ENCODE measurements at regions of chr5 and their contacts with region 1.

Region 1: DNA sequence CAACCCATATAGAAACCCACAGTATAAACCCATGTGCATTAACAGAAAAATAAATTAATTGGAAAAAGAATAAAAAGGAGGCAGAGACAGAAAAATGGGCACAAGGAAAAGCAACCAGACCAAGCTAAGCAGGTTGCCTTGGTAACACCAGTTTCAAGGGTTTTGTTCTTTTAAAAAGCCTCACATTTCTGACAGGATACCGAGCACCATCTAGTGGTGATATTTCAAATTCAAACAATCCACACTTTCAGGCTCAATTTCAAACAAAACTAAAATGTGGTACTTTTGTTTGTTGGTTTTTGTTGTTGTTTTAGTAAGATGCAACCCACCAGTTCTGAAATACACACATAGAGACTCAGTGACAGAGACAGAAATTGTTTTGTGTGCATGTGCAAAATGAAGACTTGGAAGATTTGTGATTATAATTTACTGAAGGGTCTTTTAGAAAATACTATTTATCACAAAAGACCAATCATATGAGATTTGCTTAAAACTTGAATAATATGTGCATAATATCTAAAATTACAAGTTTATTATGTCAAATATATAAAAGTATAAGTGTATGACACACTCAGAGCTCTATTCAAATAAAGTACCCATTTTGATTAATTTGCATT is 318.2 kb downstream of the SLCO4C1 start:
- DNase-seq: peak in 1 of 2 experiments; percentile 52
- H3K4me3 ChIP-seq: no peak overlapping the region
- H3K4me3 Mint-ChIP-seq: no peak overlapping the region
- H3K27ac Mint-ChIP-seq: no peak overlapping the region
- H3K4me1 ChIP-seq: no peaks in the 10 kb centered on the region
- H3K4me1 Mint-ChIP-seq: no peaks in the 10 kb centered on the region
- H3K27me3 ChIP-seq: no peaks in the 10 kb centered on the region
- H3K27me3 Mint-ChIP-seq: peaks cover 3% of the 10 kb centered on the region
- CTCF ChIP-seq: peak; percentile 66 to 70

Region 2: GRCh38 chr5:101728933-101729332 is 248.9 kb before region 1 on chr5:
- CTCF ChIA-PET with region 1: interaction called, 3 read pairs
- POLR2A ChIA-PET with region 1: no interaction called
- intact Hi-C with region 1: loop called (anchors 2 kb)
- DNase-seq: peak in 1 of 2 experiments; percentile 13
- H3K4me3 ChIP-seq: no peak overlapping the region
- H3K4me3 Mint-ChIP-seq: no peak overlapping the region
- H3K27ac Mint-ChIP-seq: no peak overlapping the region
- H3K4me1 ChIP-seq: no peaks in the 10 kb centered on the region
- H3K4me1 Mint-ChIP-seq: no peaks in the 10 kb centered on the region
- H3K27me3 ChIP-seq: no peaks in the 10 kb centered on the region
- H3K27me3 Mint-ChIP-seq: no peaks in the 10 kb centered on the region
- CTCF ChIP-seq: peak; percentile 15 to 28

Region 3: GRCh38 chr5:102200861-102201260 is 223.0 kb after region 1 on chr5:
- CTCF ChIA-PET with region 1: no interaction called
- POLR2A ChIA-PET with region 1: no interaction called
- intact Hi-C with region 1: no loop called
- DNase-seq: peak; percentile 14 to 33
- H3K4me3 ChIP-seq: no peak overlapping the region
- H3K4me3 Mint-ChIP-seq: peak overlapping the region; percentile 8
- H3K27ac Mint-ChIP-seq: peak overlapping the region; percentile 62
- H3K4me1 ChIP-seq: peaks cover 14% of the 10 kb centered on the region
- H3K4me1 Mint-ChIP-seq: peaks cover 16% of the 10 kb centered on the region
- H3K27me3 ChIP-seq: no peaks in the 10 kb centered on the region
- H3K27me3 Mint-ChIP-seq: no peaks in the 10 kb centered on the region
- CTCF ChIP-seq: no peak